ENCODE measurements at regions of chr3 and their contacts with region 1.

Region 1: GRCh38 chr3:67113802-67114407 is 115.8 kb downstream of the KBTBD8 start:
- DNase-seq: peak; percentile 74 to 76
- H3K4me3 ChIP-seq: no peak overlapping the region
- H3K27ac ChIP-seq: no peak overlapping the region
- H3K4me1 ChIP-seq: peaks cover 0 to 11% (median 0%) of the 10 kb centered on the region in 4 donors
- H3K27me3 ChIP-seq: peaks cover 0 to 6% of the 10 kb centered on the region in 2 donors
- CTCF ChIP-seq: peak; percentile 69 to 76

Region 2: DNA sequence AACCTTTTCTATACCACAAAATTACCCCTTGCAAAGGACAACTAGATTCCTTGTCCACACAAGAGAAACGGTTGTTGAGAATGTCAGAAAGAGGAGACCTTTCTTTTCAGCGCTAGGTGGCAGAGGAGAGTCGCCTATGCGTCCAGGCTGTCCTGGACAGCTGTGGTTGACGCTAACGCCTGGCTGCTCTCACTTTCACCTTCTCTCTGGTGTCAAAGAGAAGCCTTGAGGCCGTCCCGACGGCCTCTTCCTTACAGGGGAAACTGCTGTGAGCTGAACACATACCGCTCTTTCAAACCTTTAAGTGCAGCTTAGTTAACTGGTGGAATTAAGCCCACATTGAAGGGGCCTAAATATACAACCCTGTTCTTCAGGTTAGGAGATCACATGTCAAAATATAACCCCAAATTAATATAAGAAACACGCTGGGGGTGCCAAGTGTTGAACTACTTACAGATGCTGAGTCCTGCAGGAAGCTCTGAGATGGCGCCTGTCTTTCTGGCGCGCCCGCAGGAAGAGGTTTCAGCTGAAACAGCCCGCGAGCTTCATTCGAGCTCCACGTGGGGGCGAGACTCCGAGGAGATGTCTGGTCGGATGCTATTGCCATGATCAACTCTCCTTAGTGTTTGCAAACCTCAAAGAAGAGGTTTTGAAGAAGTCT is 141.9 kb before region 1 on chr3:
- intact Hi-C with region 1: loop called (anchors 5 kb)
- DNase-seq: peak; percentile 60 to 75
- H3K4me3 ChIP-seq: peak overlapping the region; percentile 28 to 43
- H3K27ac ChIP-seq: no peak overlapping the region
- H3K4me1 ChIP-seq: peaks cover 0 to 5% (median 0%) of the 10 kb centered on the region in 4 donors
- H3K27me3 ChIP-seq: no peaks in the 10 kb centered on the region
- CTCF ChIP-seq: peak; percentile 68 to 85

Region 3: DNA sequence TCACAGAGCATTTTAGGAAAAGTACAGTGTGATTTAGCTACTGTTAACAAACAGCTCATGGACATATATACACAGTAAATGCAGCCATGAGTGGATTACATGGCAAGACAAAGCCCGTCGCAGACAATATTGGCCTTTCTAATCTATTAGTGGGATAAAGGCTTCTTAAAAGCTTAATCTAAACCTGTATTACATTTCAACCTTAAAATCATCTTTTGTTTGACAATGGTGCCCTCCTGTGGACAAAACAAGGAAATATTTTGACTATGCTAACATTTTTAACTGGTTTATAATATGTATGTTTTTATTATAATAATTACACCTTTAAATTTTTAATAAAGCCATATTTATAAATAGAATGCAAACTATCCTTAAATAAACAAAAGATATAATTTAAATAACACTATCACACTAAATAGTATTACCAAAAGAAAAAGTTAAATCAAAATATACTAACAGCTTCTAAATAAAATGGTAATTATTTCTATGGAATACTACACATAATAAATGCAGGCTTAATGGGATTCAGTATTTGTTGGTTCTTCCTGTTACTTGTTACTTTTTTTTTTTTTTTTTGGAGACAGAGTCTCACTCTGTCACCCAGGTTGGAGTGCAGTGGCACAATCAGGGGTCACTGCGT is 1779.8 kb after region 1 on chr3:
- intact Hi-C with region 1: loop called (anchors 10 kb)
- DNase-seq: no peak
- H3K4me3 ChIP-seq: no peak overlapping the region
- H3K27ac ChIP-seq: no peak overlapping the region
- H3K4me1 ChIP-seq: no peaks in the 10 kb centered on the region
- H3K27me3 ChIP-seq: peaks cover 0 to 2% of the 10 kb centered on the region in 2 donors
- CTCF ChIP-seq: peak; percentile 35 to 50

Measured in tibial artery (tissue), 4 donors.